ENCODE measurements at regions of chr13 and their contacts with region 1.

Region 1: GRCh38 chr13:41384755-41385503 is 72.4 kb upstream of the RGCC start:
- DNase-seq: no peak
- H3K4me3 ChIP-seq: no peak overlapping the region
- H3K4me3 Mint-ChIP-seq: no peak overlapping the region
- H3K27ac Mint-ChIP-seq: no peak overlapping the region
- H3K4me1 ChIP-seq: no peaks in the 10 kb centered on the region
- H3K4me1 Mint-ChIP-seq: peaks cover 4% of the 10 kb centered on the region
- H3K27me3 ChIP-seq: no peaks in the 10 kb centered on the region
- H3K27me3 Mint-ChIP-seq: no peaks in the 10 kb centered on the region
- CTCF ChIP-seq: peak; percentile 32 to 61

Region 2: DNA sequence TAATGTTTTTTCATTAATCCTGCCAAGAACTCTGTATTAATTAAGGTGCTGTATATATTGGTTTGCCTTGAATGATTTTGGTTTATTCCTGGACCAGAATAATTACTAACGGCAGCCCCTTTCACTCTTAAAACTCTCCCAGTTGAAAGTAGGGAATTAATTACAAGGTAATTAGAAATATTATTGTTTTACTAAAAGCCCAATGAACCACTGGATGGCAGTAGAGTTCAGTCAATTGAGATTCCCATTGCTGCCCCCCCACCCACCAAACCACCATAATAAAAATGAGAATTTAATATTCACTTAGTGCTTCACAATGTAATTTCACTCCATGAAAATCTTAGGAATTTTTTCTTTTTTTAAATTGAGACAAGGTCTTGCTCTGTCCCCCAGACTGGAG is 309.9 kb before region 1 on chr13:
- CTCF ChIA-PET with region 1: no interaction called
- POLR2A ChIA-PET with region 1: no interaction called
- intact Hi-C with region 1: loop called (anchors 10 kb)
- DNase-seq: peak in 1 of 2 experiments; percentile 41
- H3K4me3 ChIP-seq: no peak overlapping the region
- H3K4me3 Mint-ChIP-seq: no peak overlapping the region
- H3K27ac Mint-ChIP-seq: no peak overlapping the region
- H3K4me1 ChIP-seq: no peaks in the 10 kb centered on the region
- H3K4me1 Mint-ChIP-seq: no peaks in the 10 kb centered on the region
- H3K27me3 ChIP-seq: no peaks in the 10 kb centered on the region
- H3K27me3 Mint-ChIP-seq: no peaks in the 10 kb centered on the region
- CTCF ChIP-seq: peak; percentile 36 to 68

Region 3: DNA sequence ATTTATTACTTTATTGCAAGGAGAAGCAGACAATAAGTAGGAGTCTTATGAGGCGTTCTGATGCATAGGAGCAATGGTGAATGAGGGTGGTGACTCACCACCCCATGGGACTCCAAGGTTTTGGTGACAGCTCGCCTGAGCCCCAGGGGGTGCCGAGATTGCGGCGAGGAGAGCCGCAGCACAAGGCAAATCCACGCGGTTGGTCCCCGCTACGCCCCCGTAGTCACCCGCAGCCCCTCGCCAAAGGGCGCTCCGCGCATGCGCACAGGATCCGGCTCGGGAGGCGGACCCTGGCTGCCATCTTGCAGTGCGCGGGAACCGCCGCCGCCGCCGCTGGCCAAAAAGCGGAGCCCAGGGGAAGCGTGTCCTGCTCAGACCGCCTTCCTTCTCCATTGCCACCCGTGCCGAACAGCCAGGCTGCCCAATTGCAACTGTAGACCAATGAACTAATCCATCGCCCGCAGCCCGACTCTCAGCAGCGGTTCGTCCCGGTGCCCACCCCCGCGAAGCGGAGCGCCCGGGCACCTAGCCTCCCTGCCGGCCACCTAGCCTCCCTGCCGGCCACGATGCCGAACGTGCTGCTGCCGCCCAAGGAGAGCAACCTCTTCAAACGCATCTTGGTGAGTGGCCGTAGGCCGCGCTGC is 73.8 kb before region 1 on chr13 and contains the start of gene NAA16:
- CTCF ChIA-PET with region 1: no interaction called
- POLR2A ChIA-PET with region 1: no interaction called
- intact Hi-C with region 1: no loop called
- DNase-seq: peak; percentile 90 to 94
- H3K4me3 ChIP-seq: peak within 1 kb of the TSS; percentile 85
- H3K4me3 Mint-ChIP-seq: peak within 1 kb of the TSS; percentile 97
- H3K27ac Mint-ChIP-seq: peak within 1 kb of the TSS; percentile 85
- H3K4me1 ChIP-seq: peaks cover 6% of the 10 kb centered on the region; the same call in 1 of the 2 replicates
- H3K4me1 Mint-ChIP-seq: peaks cover 15% of the 10 kb centered on the region
- H3K27me3 ChIP-seq: no peaks in the 10 kb centered on the region
- H3K27me3 Mint-ChIP-seq: no peaks in the 10 kb centered on the region
- CTCF ChIP-seq: no peak
- total RNA-seq, gene NAA16: 32.4 and 37.3 TPM in 2 replicates

Measured in Caco-2 (cell line).